ENCODE measurements at regions of chr16 and their contacts with region 1.

Region 1: GRCh38 chr16:75011634-75012307 is 12.9 kb downstream of the ZNRF1 start:
- DNase-seq: no peak
- ATAC-seq: no peak
- H3K4me3 Mint-ChIP-seq: no peak overlapping the region
- H3K27ac Mint-ChIP-seq: no peak overlapping the region; the same call in 1 of the 2 replicates
- H3K4me1 Mint-ChIP-seq: peaks cover 27% of the 10 kb centered on the region
- H3K27me3 Mint-ChIP-seq: no peaks in the 10 kb centered on the region
- CTCF ChIP-seq: no peak

Region 2: DNA sequence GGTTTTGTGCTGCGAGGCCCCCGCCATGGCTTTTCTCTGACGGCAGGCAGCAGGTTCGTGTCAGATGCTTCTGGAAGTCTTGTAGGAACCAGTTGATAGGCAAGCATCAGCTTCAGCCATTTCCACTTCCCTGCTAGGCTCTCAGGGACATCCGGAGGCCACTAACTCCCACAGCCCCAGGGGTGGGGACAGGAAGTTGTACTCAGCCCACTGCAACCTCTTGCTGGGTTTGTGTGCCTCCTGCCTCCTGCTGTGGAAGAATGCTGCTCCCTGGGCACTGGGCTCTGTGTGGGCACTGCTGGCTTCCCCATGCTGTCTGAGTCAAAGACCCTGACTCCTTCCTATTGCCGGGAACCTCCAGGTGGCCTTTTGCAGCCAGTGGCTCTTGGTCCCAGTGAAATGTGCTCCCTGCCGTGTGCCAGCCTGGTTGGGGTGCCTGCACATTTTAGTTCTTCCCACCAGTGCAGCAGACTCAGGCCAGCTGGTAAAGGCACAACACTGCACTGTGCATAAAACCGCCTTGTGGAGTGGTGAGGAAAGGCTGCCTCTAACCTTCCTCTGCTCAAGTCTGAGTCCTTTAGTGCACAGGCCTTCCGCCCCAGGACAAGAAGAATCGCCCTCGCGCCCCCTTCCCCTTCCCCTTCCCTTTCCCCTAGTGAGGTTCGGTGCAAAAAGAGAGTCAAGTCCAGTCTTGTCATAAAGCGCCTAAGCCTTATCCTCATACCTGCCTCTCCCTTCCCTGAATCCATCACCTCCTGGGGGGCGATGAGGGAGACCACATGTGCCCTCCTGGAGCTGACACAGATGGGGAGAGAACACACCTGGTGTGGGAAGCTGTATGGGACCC is 88.2 kb after region 1 on chr16:
- CTCF ChIA-PET with region 1: interaction called, 11 read pairs
- POLR2A ChIA-PET with region 1: no interaction called
- DNase-seq: no peak
- ATAC-seq: peak; percentile 8
- H3K4me3 Mint-ChIP-seq: no peak overlapping the region
- H3K27ac Mint-ChIP-seq: peak overlapping the region; percentile 81
- H3K4me1 Mint-ChIP-seq: peaks cover 60% of the 10 kb centered on the region
- H3K27me3 Mint-ChIP-seq: no peaks in the 10 kb centered on the region
- CTCF ChIP-seq: no peak

Measured in WTC11 (cell line).